ENCODE measurements at regions of chr7 and their contacts with region 1.

Region 1: GRCh38 chr7:97872025-97872669 is at the start of gene ASNS:
- DNase-seq: peak; percentile 96
- H3K4me3 ChIP-seq: peak within 1 kb of the TSS; percentile 71 to 87 (median 78)
- H3K27ac ChIP-seq: peak within 1 kb of the TSS; percentile 81 to 88 (median 86)
- H3K4me1 ChIP-seq: peaks cover 0 to 13% (median 9%) of the 10 kb centered on the region in 4 donors
- H3K27me3 ChIP-seq: no peaks in the 10 kb centered on the region
- CTCF ChIP-seq: no peak
- EP300 ChIP-seq: no peak
- POLR2A ChIP-seq: peak; percentile 64 to 70
- total RNA-seq, gene ASNS: 14.1 to 23.5 (median 22.1) TPM

Region 2: DNA sequence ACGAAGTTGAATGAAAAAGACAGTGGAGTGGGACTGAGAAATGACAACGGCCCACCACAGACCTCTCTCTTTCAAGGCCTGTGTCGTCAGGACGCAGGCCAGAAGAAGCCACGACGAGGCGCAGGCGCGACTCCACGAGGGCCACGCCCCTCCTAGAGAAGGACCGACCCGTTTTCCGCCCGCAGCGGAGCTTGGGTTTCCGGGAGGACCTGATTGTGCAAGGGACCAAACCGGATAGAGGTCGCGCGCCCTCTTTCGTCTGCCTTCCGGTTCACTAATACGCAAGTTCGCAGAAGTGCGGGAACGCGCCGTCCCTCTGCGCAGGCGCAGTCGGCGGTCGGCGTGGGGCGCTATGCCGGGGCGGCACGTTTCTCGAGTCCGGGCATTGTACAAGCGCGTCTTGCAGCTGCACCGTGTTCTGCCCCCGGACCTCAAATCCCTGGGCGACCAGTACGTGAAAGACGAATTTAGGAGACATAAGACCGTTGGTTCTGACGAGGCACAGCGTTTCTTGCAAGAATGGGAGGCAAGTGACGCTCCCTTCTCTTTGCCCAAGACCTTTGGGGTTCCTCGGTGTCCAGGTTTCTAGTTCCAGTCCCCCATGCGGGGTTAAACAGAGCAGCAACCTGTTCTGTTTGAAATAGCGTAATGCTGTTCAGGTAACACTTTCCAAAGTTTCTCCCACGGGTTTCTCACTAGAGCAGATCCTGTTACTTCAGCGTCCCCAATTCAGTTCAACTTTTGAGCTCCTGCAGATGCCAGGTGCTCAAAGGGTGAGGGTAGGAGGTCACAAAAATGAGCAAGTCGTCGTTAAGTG is 754.6 kb before region 1 on chr7 and contains the start of gene SDHAF3:
- intact Hi-C with region 1: loop called (anchors 5 kb)
- DNase-seq: peak; percentile 99
- H3K4me3 ChIP-seq: peak within 1 kb of the TSS; percentile 59 to 65 (median 63)
- H3K27ac ChIP-seq: peak within 1 kb of the TSS; percentile 77 to 84 (median 78)
- H3K4me1 ChIP-seq: peaks cover 0 to 21% (median 8%) of the 10 kb centered on the region in 4 donors
- H3K27me3 ChIP-seq: no peaks in the 10 kb centered on the region
- CTCF ChIP-seq: no peak
- EP300 ChIP-seq: peak in 2 of 4 donors; percentile 54 to 83
- POLR2A ChIP-seq: peak; percentile 56 to 59
- total RNA-seq, gene SDHAF3: 3.3 to 13.2 (median 10.8) TPM

Region 3: GRCh38 chr7:97971990-97972943 is 100.1 kb after region 1 on chr7:
- intact Hi-C with region 1: no loop called
- DNase-seq: peak; percentile 87
- H3K4me3 ChIP-seq: peak overlapping the region; percentile 68 to 99 (median 90)
- H3K27ac ChIP-seq: peak overlapping the region; percentile 69 to 81 (median 74)
- H3K4me1 ChIP-seq: peaks cover 0 to 15% (median 4%) of the 10 kb centered on the region in 4 donors
- H3K27me3 ChIP-seq: no peaks in the 10 kb centered on the region
- CTCF ChIP-seq: no peak
- EP300 ChIP-seq: no peak
- POLR2A ChIP-seq: no peak

Region 4: DNA sequence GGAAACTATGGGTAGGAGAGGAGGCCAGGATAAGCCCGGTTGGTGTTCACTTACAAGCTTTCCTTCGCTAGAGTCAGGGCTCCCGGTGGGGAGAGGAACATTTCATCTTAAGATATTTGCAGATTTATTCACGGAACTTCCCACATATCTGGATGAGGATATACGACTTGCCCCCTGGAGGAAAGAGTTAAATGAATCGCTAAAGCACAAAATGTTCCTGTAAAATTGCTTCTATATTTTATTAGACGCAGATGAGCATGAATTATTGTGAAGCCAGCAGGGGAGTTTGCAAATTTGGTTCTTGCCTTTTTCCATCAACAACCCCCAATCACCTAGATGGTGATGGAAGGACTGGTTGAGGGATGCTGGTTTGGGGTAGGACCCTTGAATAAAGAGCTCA is 576.6 kb after region 1 on chr7:
- intact Hi-C with region 1: no loop called
- DNase-seq: no peak
- H3K4me3 ChIP-seq: no peak overlapping the region
- H3K27ac ChIP-seq: no peak overlapping the region
- H3K4me1 ChIP-seq: no peaks in the 10 kb centered on the region
- H3K27me3 ChIP-seq: no peaks in the 10 kb centered on the region
- CTCF ChIP-seq: no peak
- EP300 ChIP-seq: no peak
- POLR2A ChIP-seq: no peak